K562 (cell line): ENCODE measurements at regions of chr10 and their contacts with region 1.

Region 1: GRCh38 chr10:27360581-27361172 is 120.1 kb upstream of the ACBD5 start:
- DNase-seq: peak; percentile 59 to 86 (median 68)
- ATAC-seq: peak; percentile 96
- H3K4me3 ChIP-seq: no peak overlapping the region
- H3K27ac ChIP-seq: no peak overlapping the region
- H3K4me1 ChIP-seq: no peaks in the 10 kb centered on the region
- H3K27me3 ChIP-seq: no peaks in the 10 kb centered on the region; a peak in 1 of 5 replicates
- CTCF ChIP-seq: peak; percentile 87 to 94 (median 87)
- EP300 ChIP-seq: no peak
- POLR2A ChIP-seq: no peak
- RAD21 ChIP-seq: peak; percentile 88 to 91

Region 2: GRCh38 chr10:26890956-26891355 is 469.7 kb before region 1 on chr10:
- CTCF ChIA-PET with region 1: interaction called, 4 read pairs
- POLR2A ChIA-PET with region 1: no interaction called
- in situ Hi-C with region 1: loop called (anchors 5 kb)
- intact Hi-C with region 1: no loop called
- DNase-seq: peak in 3 of 4 experiments; percentile 14 to 61 (median 18)
- ATAC-seq: peak; percentile 80
- H3K4me3 ChIP-seq: no peak overlapping the region
- H3K27ac ChIP-seq: no peak overlapping the region
- H3K4me1 ChIP-seq: no peaks in the 10 kb centered on the region; a peak in 1 of 5 replicates
- H3K27me3 ChIP-seq: peaks cover 3 to 10% of the 10 kb centered on the region in 2 experiments; a peak in 3 of 5 replicates
- CTCF ChIP-seq: peak; percentile 55 to 62 (median 58)
- EP300 ChIP-seq: no peak
- POLR2A ChIP-seq: no peak
- RAD21 ChIP-seq: peak; percentile 20 to 74; a peak in 3 of 4 replicates

Region 3: DNA sequence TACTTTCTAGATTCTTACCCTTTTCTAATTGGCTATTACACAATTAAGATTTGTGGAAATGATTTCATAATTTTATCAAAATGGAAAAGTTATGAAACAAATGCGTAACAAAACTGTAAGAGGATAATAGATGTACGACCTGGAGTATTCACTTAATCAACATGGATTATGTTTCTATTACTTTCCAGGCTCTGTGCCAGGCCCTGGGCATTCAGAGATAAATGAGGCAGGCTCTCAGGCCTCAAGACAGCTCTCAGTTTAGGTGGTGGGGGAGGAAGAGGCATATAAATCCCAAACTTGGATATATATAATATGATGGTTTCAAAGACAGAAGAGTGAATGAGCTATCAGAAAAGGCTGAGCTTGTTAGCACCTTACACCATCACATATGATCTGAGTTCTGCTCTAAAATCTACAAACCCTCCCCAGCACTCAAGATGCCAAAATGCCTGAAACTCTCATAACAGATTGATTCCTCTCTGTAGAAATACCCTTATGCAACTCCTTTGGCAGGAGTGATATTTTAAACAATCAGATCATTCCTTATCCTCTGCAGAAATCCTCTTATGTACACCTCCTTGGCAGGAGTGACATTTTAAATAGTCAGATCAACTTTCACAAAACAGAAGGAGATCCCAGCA is 162.6 kb before region 1 on chr10:
- CTCF ChIA-PET with region 1: no interaction called
- POLR2A ChIA-PET with region 1: no interaction called
- in situ Hi-C with region 1: no loop called
- intact Hi-C with region 1: no loop called
- DNase-seq: no peak
- ATAC-seq: no peak
- H3K4me3 ChIP-seq: no peak overlapping the region
- H3K27ac ChIP-seq: no peak overlapping the region
- H3K4me1 ChIP-seq: no peaks in the 10 kb centered on the region
- H3K27me3 ChIP-seq: no peaks in the 10 kb centered on the region
- CTCF ChIP-seq: no peak
- EP300 ChIP-seq: no peak
- POLR2A ChIP-seq: no peak
- RAD21 ChIP-seq: no peak

Region 4: DNA sequence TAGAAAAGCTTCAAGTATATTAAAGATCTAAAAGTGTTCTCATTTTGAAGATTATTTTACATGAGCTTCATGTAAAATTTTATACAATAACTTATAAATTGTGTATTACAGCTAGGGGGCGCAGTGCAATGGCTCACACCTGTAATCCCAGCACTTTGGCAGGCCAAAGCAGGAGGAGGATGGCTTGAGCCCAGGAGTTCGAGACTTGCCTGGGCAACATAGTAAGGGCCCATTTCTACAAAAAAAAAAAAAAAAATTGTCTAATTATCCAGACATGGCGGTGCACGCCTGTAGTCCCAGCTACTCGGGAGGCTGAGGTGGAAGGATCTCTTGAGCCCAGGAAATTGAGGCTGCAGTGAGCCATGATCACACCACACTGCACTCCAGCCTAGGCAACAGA is 136.7 kb before region 1 on chr10:
- CTCF ChIA-PET with region 1: interaction called, 5 read pairs
- POLR2A ChIA-PET with region 1: no interaction called
- in situ Hi-C with region 1: no loop called
- intact Hi-C with region 1: loop called (anchors 5 kb)
- DNase-seq: peak in 3 of 4 experiments; percentile 11 to 54 (median 12)
- ATAC-seq: peak; percentile 87
- H3K4me3 ChIP-seq: no peak overlapping the region
- H3K27ac ChIP-seq: no peak overlapping the region
- H3K4me1 ChIP-seq: no peaks in the 10 kb centered on the region
- H3K27me3 ChIP-seq: no peaks in the 10 kb centered on the region
- CTCF ChIP-seq: peak; percentile 47 to 68 (median 67)
- EP300 ChIP-seq: no peak
- POLR2A ChIP-seq: no peak
- RAD21 ChIP-seq: peak in 1 of 2 experiments; percentile 31; a peak in 1 of 4 replicates

Region 5: GRCh38 chr10:27297839-27298521 is 62.7 kb before region 1 on chr10:
- CTCF ChIA-PET with region 1: no interaction called
- POLR2A ChIA-PET with region 1: no interaction called
- in situ Hi-C with region 1: no loop called
- intact Hi-C with region 1: no loop called
- DNase-seq: no peak
- ATAC-seq: no peak
- H3K4me3 ChIP-seq: no peak overlapping the region
- H3K27ac ChIP-seq: no peak overlapping the region
- H3K4me1 ChIP-seq: no peaks in the 10 kb centered on the region; a peak in 1 of 5 replicates
- H3K27me3 ChIP-seq: peaks cover 0 to 6% of the 10 kb centered on the region in 2 experiments; a peak in 1 of 5 replicates
- CTCF ChIP-seq: no peak
- EP300 ChIP-seq: no peak
- POLR2A ChIP-seq: no peak
- RAD21 ChIP-seq: no peak